CD8-positive, alpha-beta T cell (primary cell): ENCODE measurements at regions of chr6 and their contacts with region 1.

Region 1: GRCh38 chr6:85593438-85594196 is at the start of gene SNX14:
- DNase-seq: peak; percentile 59 to 90 (median 76)
- ATAC-seq: peak; percentile 78
- H3K4me3 ChIP-seq: peak within 1 kb of the TSS; percentile 90 to 95
- H3K4me3 Mint-ChIP-seq: peak within 1 kb of the TSS; percentile 97
- H3K27ac ChIP-seq: peak within 1 kb of the TSS; percentile 84 to 88
- H3K27ac Mint-ChIP-seq: peak within 1 kb of the TSS; percentile 98
- H3K4me1 ChIP-seq: peaks cover 20% of the 10 kb centered on the region
- H3K4me1 Mint-ChIP-seq: peaks cover 53% of the 10 kb centered on the region
- H3K27me3 ChIP-seq: no peaks in the 10 kb centered on the region
- H3K27me3 Mint-ChIP-seq: no peaks in the 10 kb centered on the region
- CTCF ChIP-seq: no peak
- total RNA-seq, gene SNX14: 34.2 to 38.1 TPM

Region 2: GRCh38 chr6:83859410-83860358 is 1733.9 kb before region 1 on chr6 and contains the start of gene CYB5R4:
- CTCF ChIA-PET with region 1: no interaction called
- POLR2A ChIA-PET with region 1: no interaction called
- intact Hi-C with region 1: loop called in 1 of 2 experiments (anchors 10 kb)
- DNase-seq: peak; percentile 87 to 97 (median 93)
- ATAC-seq: peak; percentile 96
- H3K4me3 ChIP-seq: peak within 1 kb of the TSS; percentile 69 to 78
- H3K4me3 Mint-ChIP-seq: peak within 1 kb of the TSS; percentile 95
- H3K27ac ChIP-seq: peak within 1 kb of the TSS; percentile 83 to 86
- H3K27ac Mint-ChIP-seq: peak within 1 kb of the TSS; percentile 91
- H3K4me1 ChIP-seq: peaks cover 18% of the 10 kb centered on the region
- H3K4me1 Mint-ChIP-seq: peaks cover 41% of the 10 kb centered on the region
- H3K27me3 ChIP-seq: no peaks in the 10 kb centered on the region
- H3K27me3 Mint-ChIP-seq: peaks cover 12% of the 10 kb centered on the region
- CTCF ChIP-seq: peak; percentile 52
- total RNA-seq, gene CYB5R4: 15.9 to 17.7 TPM

Region 3: DNA sequence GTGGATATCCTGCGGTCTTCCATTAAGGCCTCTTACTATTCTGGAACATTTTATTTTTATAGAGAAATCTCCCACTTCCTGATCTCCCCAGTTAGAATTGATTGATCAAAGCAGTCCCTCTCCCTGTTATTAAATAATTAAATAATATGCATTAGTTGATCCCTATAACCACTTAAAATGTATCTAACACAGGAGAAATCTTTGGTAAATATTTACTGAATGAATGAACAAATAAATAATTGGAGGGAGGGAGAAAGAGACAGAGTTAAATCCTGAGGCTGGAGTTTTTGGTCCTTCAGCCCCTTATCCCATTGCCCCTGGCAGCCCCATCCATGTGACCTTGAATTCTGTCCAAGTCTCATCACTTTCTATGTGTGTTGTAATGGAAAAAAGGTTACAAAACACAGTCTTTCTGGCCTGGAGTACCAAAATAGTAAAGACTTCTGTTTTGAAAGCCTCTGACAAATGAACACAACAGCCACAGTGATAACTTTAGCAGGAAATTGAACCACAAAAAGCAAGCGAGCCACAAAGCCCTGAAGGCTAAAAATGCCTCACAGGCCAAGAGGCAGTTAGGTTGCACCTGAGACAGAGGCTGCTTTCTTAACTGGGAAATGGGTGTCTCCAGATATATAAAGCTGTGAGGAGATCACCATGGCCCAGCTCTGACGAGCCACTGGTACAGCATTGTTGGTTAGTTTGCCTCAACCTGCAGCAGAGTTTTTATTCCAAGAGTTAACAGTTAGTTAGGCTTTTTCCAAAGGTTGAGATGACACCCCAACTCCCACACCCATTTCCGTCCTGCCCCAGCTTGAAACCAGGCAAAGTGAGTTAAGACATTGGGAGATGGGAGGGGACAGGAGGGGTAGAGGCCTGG is 132.5 kb before region 1 on chr6:
- CTCF ChIA-PET with region 1: no interaction called
- POLR2A ChIA-PET with region 1: no interaction called
- intact Hi-C with region 1: loop called in 1 of 2 experiments (anchors 5 kb)
- DNase-seq: peak in 7 of 9 experiments; percentile 26 to 75 (median 62)
- ATAC-seq: peak; percentile 64
- H3K4me3 ChIP-seq: peak overlapping the region in 1 of 2 experiments; percentile 0
- H3K4me3 Mint-ChIP-seq: peak overlapping the region; percentile 70
- H3K27ac ChIP-seq: peak overlapping the region; percentile 22 to 69
- H3K27ac Mint-ChIP-seq: peak overlapping the region; percentile 92
- H3K4me1 ChIP-seq: peaks cover 100% of the 10 kb centered on the region
- H3K4me1 Mint-ChIP-seq: peaks cover 98% of the 10 kb centered on the region
- H3K27me3 ChIP-seq: no peaks in the 10 kb centered on the region
- H3K27me3 Mint-ChIP-seq: peaks cover 2% of the 10 kb centered on the region
- CTCF ChIP-seq: no peak

Region 4: DNA sequence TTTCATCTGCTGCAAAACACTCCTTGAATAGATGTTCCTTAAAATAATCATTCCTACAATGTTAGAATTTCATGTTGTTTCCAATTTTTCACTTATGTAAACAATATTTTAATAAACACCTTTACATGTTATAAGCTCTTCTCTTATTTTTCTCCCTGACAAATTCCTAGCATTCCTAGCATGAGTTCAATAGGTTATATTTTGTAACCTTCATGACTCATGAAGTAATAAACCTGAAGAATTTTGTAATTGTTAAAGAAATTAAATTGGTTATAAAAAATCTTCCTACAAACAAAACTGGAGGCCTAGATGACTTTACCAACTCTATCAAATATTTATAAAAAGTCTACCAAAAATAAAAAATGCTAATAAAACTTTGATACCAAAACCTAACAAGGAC is 77.4 kb before region 1 on chr6:
- CTCF ChIA-PET with region 1: no interaction called
- POLR2A ChIA-PET with region 1: no interaction called
- intact Hi-C with region 1: no loop called
- DNase-seq: no peak
- ATAC-seq: no peak
- H3K4me3 ChIP-seq: no peak overlapping the region
- H3K4me3 Mint-ChIP-seq: no peak overlapping the region
- H3K27ac ChIP-seq: no peak overlapping the region
- H3K27ac Mint-ChIP-seq: no peak overlapping the region
- H3K4me1 ChIP-seq: no peaks in the 10 kb centered on the region
- H3K4me1 Mint-ChIP-seq: no peaks in the 10 kb centered on the region
- H3K27me3 ChIP-seq: no peaks in the 10 kb centered on the region
- H3K27me3 Mint-ChIP-seq: no peaks in the 10 kb centered on the region
- CTCF ChIP-seq: no peak

Region 5: DNA sequence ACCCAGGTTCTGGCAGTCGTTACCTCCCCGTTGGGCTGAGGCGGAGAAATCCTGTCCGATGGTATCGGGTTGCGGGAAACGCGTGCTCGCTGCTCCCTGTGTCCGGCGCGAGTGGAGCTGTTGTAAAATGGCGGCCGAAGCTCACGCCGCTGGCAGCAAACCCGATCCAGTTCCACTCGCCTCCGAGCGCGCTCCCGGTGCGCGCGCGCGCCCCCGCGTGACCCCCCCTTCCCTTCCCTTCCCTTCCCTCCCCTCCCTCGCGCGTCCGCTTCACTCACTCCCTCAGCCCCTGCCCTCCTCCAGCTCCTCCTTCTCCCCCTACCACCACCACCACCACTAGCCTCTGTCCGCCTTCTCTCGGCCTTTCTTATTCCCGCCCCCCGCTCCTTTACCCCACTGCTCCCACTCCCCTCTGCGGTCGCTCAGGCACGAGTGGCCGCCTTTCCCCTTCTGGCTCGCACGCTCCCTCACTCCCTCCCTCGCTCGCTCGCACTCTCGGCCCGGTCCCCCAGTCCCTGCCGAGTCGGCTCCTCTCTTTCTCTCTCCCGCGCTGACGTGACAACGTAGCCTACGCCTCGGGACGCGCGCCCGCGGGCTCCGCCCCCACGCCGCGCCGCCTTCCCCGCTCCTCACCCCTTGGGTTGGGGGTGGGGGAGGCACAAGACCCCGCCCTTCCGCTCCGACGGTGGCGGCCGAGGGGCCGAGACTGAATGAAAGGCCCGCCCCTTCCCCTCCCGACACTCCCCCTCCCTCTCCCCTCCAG is 49.3 kb after region 1 on chr6 and contains the start of gene SYNCRIP:
- CTCF ChIA-PET with region 1: interaction called, 3 read pairs
- POLR2A ChIA-PET with region 1: interaction called, 50 read pairs
- intact Hi-C with region 1: loop called (anchors 1 kb)
- DNase-seq: peak; percentile 95 to 99 (median 98)
- ATAC-seq: peak; percentile 81
- H3K4me3 ChIP-seq: peak within 1 kb of the TSS; percentile 98 to 100
- H3K4me3 Mint-ChIP-seq: peak within 1 kb of the TSS; percentile 91
- H3K27ac ChIP-seq: peak within 1 kb of the TSS; percentile 98
- H3K27ac Mint-ChIP-seq: peak within 1 kb of the TSS; percentile 96
- H3K4me1 ChIP-seq: peaks cover 38% of the 10 kb centered on the region
- H3K4me1 Mint-ChIP-seq: peaks cover 46% of the 10 kb centered on the region
- H3K27me3 ChIP-seq: no peaks in the 10 kb centered on the region
- H3K27me3 Mint-ChIP-seq: no peaks in the 10 kb centered on the region
- CTCF ChIP-seq: no peak
- total RNA-seq, gene SYNCRIP: 64.0 to 64.3 TPM

Region 6: DNA sequence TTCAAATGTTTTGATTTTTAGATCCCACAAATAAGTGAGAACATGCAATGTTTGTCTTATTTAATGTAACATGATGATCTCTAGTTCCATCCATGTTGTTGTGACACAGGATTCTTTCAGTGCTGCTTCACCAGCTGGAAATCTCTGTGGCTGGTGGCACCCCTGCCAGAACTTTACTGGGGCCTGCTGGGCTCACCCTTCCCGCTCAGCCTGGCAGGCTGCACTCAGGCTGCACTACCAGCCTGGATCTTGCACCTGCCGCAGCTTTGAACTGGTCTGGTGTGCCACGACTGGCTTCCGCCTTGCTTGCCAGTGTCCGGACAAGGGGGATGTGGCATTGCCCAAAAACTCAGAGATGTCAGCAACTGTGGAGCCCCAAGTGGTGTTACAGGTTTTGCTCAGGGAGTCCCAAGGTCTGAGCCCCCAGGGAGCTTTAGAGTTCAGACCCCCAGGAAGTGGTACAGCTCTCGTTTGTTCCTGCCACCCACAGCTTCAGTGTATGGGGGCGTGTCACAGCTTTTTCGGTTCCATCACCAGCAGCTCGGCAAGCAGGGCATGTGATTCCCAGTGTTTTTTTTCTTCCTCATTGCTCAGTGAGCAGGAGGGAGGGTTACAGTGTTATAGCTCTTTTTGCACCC is 121.4 kb after region 1 on chr6:
- CTCF ChIA-PET with region 1: no interaction called
- POLR2A ChIA-PET with region 1: no interaction called
- intact Hi-C with region 1: no loop called
- DNase-seq: no peak
- ATAC-seq: no peak
- H3K4me3 ChIP-seq: no peak overlapping the region
- H3K4me3 Mint-ChIP-seq: no peak overlapping the region
- H3K27ac ChIP-seq: no peak overlapping the region
- H3K27ac Mint-ChIP-seq: no peak overlapping the region
- H3K4me1 ChIP-seq: no peaks in the 10 kb centered on the region
- H3K4me1 Mint-ChIP-seq: no peaks in the 10 kb centered on the region
- H3K27me3 ChIP-seq: no peaks in the 10 kb centered on the region
- H3K27me3 Mint-ChIP-seq: peaks cover 13% of the 10 kb centered on the region
- CTCF ChIP-seq: no peak

Region 7: GRCh38 chr6:87589693-87590549 is 1996.3 kb after region 1 on chr6 and contains the starts of genes ORC3 and RARS2:
- CTCF ChIA-PET with region 1: no interaction called
- POLR2A ChIA-PET with region 1: no interaction called
- intact Hi-C with region 1: loop called in 1 of 2 experiments (anchors 2 kb)
- DNase-seq: peak; percentile 85 to 96 (median 93)
- ATAC-seq: peak; percentile 98
- H3K4me3 ChIP-seq: peak within 1 kb of the TSS; percentile 69 to 89
- H3K4me3 Mint-ChIP-seq: peak within 1 kb of the TSS; percentile 93
- H3K27ac ChIP-seq: peak within 1 kb of the TSS; percentile 60 to 78
- H3K27ac Mint-ChIP-seq: peak within 1 kb of the TSS; percentile 92
- H3K4me1 ChIP-seq: peaks cover 35% of the 10 kb centered on the region
- H3K4me1 Mint-ChIP-seq: peaks cover 64% of the 10 kb centered on the region
- H3K27me3 ChIP-seq: no peaks in the 10 kb centered on the region
- H3K27me3 Mint-ChIP-seq: no peaks in the 10 kb centered on the region
- CTCF ChIP-seq: no peak
- total RNA-seq, gene ORC3: 9.4 to 9.9 TPM
- total RNA-seq, gene RARS2: 15.8 to 20.4 TPM